T-cell (primary cell): ENCODE measurements at regions of chr4 and their contacts with region 1.

Region 1: GRCh38 chr4:128307123-128307571 is 19.5 kb upstream of the PGRMC2 start:
- DNase-seq: no peak
- ATAC-seq: no peak
- H3K4me3 ChIP-seq: no peak overlapping the region
- H3K4me3 Mint-ChIP-seq: no peak overlapping the region
- H3K27ac ChIP-seq: no peak overlapping the region
- H3K27ac Mint-ChIP-seq: no peak overlapping the region
- H3K4me1 ChIP-seq: no peaks in the 10 kb centered on the region
- H3K4me1 Mint-ChIP-seq: no peaks in the 10 kb centered on the region
- H3K27me3 ChIP-seq: no peaks in the 10 kb centered on the region
- H3K27me3 Mint-ChIP-seq: no peaks in the 10 kb centered on the region

Region 2: DNA sequence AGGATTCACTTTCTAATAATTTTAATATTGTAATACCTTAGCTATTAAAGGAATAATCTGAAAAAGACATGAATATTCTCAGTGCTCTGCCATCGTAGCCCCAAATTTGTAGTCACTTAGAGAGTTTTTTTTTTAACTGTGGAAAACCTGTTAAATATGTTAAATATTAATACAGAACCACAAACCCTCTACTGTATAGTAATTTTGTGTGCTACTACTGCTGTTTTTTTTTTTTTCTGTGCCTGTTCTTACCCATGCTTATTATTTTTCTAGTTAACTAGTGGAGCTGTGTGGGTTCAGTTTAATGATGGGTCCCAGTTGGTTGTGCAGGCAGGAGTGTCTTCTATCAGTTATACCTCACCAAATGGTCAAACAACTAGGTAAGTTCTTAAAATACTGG is 410.6 kb before region 1 on chr4:
- CTCF ChIA-PET with region 1: no interaction called
- POLR2A ChIA-PET with region 1: interaction called in 1 of 2 experiments, 13 read pairs
- DNase-seq: no peak
- ATAC-seq: no peak
- H3K4me3 ChIP-seq: no peak overlapping the region
- H3K4me3 Mint-ChIP-seq: no peak overlapping the region
- H3K27ac ChIP-seq: no peak overlapping the region
- H3K27ac Mint-ChIP-seq: no peak overlapping the region
- H3K4me1 ChIP-seq: no peaks in the 10 kb centered on the region
- H3K4me1 Mint-ChIP-seq: no peaks in the 10 kb centered on the region
- H3K27me3 ChIP-seq: no peaks in the 10 kb centered on the region
- H3K27me3 Mint-ChIP-seq: no peaks in the 10 kb centered on the region

Region 3: DNA sequence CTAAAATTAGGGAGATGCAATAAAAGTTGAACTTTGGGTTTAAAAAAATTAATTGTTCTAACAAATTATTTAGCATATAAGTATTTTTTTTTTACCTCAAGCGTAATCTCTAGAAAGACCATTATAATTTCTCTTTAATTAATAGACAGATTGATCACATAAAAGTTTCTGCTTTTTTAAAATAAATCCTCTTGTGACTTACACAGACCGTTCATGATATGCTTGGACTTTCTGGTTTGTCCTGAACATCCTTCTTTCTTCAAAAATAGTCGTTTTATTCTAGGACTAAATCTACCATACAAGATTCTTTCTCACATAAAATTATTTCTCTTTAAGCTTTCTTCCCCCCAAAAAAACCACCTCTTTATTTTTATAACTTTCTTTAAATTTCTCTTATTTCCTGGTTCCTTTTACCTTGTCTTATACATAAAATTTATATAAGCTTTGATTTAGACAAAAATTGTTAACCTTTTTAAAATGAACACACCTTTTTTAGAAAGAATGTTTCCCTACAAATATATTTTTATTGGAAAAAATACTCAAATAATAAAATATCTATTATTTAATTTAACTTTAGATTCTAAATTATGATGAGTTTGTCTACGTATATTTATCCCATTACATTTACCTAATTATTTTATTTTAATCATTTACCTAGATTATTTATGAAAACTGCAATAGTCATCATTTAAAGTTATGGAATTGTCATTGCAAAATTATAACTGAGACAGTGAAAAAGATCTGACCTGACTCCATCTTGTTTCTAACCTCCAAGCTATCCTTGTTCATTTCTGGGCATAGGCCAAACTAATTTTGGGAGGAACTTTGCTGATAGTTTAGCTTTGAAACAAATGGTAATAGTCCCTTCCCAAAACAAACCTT is 57.1 kb before region 1 on chr4:
- CTCF ChIA-PET with region 1: no interaction called
- POLR2A ChIA-PET with region 1: no interaction called
- DNase-seq: no peak
- ATAC-seq: no peak
- H3K4me3 ChIP-seq: no peak overlapping the region
- H3K4me3 Mint-ChIP-seq: no peak overlapping the region
- H3K27ac ChIP-seq: no peak overlapping the region
- H3K27ac Mint-ChIP-seq: no peak overlapping the region
- H3K4me1 ChIP-seq: no peaks in the 10 kb centered on the region
- H3K4me1 Mint-ChIP-seq: no peaks in the 10 kb centered on the region
- H3K27me3 ChIP-seq: no peaks in the 10 kb centered on the region
- H3K27me3 Mint-ChIP-seq: peaks cover 11 to 16% of the 10 kb centered on the region in 2 donors